Head of caudate nucleus (tissue), 42 donors: ENCODE measurements at regions of chr12 and their contacts with region 1.

Region 1: GRCh38 chr12:50569321-50569720 is 64.5 kb downstream of the DIP2B start:
- DNase-seq: peak in 3 of 42 donors; percentile 11 to 20 (median 12)

Region 2: GRCh38 chr12:50517456-50518048 is 51.8 kb before region 1 on chr12:
- intact Hi-C with region 1: loop called (anchors 10 kb)
- DNase-seq: no peak

Region 3: GRCh38 chr12:50533203-50533584 is 36.1 kb before region 1 on chr12:
- intact Hi-C with region 1: loop called (anchors 5 kb)
- DNase-seq: no peak